CD4-positive, alpha-beta memory T cell (primary cell): ENCODE measurements at regions of chr3 and their contacts with region 1.

Region 1: DNA sequence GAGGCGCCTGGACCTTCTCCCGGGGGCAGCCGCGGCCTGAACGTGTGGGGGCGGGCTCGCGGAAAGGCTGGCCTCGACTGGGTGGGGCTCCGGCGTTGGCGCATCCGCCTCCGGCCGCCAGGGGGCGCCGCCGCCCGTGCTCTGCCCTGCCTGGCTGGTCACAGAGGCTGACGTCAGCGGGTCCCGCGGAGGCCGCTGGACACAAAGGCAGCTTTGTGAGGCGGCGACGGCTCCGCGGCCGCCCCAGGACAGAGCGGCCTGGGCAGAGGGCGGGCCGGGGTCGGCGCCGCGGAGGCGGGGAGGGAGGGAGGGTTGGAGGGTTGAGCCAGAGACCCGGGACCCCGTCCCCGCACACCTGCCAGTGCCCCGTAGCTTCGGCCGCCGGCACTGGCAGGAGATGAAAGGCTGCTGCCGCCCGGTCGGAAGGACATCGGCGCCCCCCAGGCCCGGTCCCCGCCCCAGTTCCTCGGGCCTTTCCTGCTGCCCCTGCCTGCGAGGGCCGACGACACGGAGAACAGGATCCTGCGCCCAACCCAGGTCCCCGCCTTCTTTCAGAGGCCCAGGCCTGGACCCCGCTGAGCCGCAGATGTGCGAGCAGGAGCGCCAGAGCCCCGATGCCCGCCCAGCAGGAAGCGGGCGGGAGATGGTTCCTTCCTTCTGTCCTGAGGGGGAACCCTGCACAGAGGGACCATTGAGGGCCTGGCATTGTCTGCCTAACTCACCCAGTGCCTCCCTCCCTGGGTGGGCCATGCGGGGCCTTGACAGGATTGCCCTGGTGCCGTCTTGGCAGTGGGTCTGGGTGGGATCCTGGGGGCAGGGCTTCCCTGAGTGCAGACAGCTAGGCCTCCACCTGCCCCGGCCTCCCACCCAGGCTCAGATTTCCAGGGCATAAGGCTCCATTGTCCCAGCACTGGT is 8.7 kb upstream of the SEMA3B start:
- DNase-seq: peak; percentile 76 to 82 (median 79)
- H3K4me3 ChIP-seq: peak overlapping the region in 1 of 2 donors; percentile 24
- H3K4me3 Mint-ChIP-seq: peak overlapping the region; percentile 36 to 83 (median 68)
- H3K27ac ChIP-seq: peak overlapping the region; percentile 46
- H3K27ac Mint-ChIP-seq: peak overlapping the region in 5 of 7 donors; percentile 48 to 91 (median 81)
- H3K4me1 ChIP-seq: peaks cover 13% of the 10 kb centered on the region
- H3K4me1 Mint-ChIP-seq: peaks cover 3 to 9% (median 4%) of the 10 kb centered on the region in 4 donors
- H3K27me3 ChIP-seq: no peaks in the 10 kb centered on the region
- H3K27me3 Mint-ChIP-seq: no peaks in the 10 kb centered on the region

Region 2: DNA sequence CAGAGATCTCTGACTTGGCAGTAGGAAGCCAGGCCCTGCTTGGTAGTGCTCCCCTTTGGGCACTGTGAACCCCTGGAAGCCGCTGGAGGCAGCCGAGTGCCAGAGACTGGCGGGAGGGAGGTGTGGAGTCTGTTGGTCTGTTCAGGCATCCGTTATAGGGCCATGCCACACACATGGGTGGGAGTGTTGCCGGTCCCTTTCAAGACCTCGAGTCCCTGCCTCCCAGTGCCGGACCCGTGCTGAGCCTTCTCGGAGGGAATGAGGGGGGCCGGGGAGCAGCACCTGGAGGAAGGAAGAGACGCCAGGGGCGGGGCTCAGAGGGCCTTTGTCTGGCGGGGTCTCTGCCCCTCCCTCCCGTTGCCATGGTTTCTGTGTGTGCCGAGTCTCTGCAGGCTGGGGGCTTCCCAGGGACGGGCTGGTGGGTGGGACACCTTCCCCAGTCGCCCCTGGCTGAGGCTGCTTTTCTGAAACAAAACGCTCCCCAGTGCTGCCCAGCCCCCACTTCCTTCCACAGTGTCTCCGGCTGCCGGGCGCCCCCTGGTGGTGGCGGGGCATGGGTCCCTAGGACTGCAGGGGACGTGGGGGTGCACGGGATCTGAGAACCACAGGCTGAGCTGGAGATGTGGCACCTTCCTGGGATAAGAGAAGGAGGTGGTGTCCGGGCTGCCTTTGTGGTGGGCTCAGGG is 14.3 kb before region 1 on chr3:
- CTCF ChIA-PET with region 1: interaction called, 34 read pairs
- POLR2A ChIA-PET with region 1: interaction called, 35 read pairs
- intact Hi-C with region 1: no loop called
- DNase-seq: peak; percentile 89 to 94 (median 92)
- H3K4me3 ChIP-seq: peak overlapping the region; percentile 24 to 44
- H3K4me3 Mint-ChIP-seq: peak overlapping the region; percentile 75 to 88 (median 80)
- H3K27ac ChIP-seq: peak overlapping the region; percentile 76
- H3K27ac Mint-ChIP-seq: peak overlapping the region; percentile 92 to 98 (median 95)
- H3K4me1 ChIP-seq: peaks cover 97% of the 10 kb centered on the region
- H3K4me1 Mint-ChIP-seq: peaks cover 44 to 89% (median 71%) of the 10 kb centered on the region in 4 donors
- H3K27me3 ChIP-seq: no peaks in the 10 kb centered on the region
- H3K27me3 Mint-ChIP-seq: no peaks in the 10 kb centered on the region

Region 3: DNA sequence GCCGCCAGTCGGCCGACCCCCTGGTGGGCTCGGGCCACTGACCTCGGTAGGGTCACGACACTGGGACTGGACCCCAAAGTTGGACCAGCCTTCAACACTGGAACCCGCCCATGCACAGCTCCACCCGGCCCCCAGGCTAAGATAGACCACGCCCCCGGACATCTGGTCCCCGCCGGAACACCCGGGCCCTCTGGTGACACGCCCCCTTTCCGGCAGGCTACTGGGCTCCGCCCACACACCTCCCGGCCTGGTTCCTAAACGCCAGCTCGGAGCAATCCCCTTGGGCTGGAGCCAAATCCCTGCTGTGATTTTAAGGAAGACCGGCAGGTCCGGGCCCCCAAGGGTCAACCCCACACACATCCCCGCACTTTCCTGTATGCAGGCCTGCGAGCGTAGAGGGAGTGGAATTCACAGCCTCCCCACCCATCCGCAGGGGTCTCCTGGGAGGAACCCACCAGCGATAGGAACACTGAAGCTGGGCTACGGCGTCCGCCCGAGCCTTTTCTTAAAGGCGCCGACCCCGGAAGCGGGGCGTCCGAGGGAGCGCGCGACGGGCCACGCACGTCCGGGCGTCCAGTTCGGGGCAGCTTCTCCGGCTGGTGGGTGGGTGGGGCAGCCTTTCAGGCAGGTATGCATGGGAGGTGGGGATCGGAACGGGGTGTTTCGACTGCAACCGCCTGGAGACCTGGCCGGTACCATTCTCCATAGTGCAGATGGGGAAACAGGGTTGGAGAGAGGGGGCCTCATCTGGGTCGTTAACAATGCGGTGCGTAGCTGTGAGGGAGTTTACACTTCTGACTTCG is 308.9 kb after region 1 on chr3 and contains the start of gene HEMK1:
- CTCF ChIA-PET with region 1: no interaction called
- POLR2A ChIA-PET with region 1: no interaction called
- intact Hi-C with region 1: no loop called
- DNase-seq: peak; percentile 90 to 92 (median 91)
- H3K4me3 ChIP-seq: peak within 1 kb of the TSS; percentile 88 to 93
- H3K4me3 Mint-ChIP-seq: peak within 1 kb of the TSS; percentile 93 to 98 (median 96)
- H3K27ac ChIP-seq: peak within 1 kb of the TSS; percentile 83
- H3K27ac Mint-ChIP-seq: peak within 1 kb of the TSS; percentile 92 to 100 (median 98)
- H3K4me1 ChIP-seq: peaks cover 71% of the 10 kb centered on the region
- H3K4me1 Mint-ChIP-seq: peaks cover 45 to 83% (median 57%) of the 10 kb centered on the region in 4 donors
- H3K27me3 ChIP-seq: no peaks in the 10 kb centered on the region
- H3K27me3 Mint-ChIP-seq: no peaks in the 10 kb centered on the region
- total RNA-seq, gene HEMK1: 55.3 to 56.7 TPM

Region 4: DNA sequence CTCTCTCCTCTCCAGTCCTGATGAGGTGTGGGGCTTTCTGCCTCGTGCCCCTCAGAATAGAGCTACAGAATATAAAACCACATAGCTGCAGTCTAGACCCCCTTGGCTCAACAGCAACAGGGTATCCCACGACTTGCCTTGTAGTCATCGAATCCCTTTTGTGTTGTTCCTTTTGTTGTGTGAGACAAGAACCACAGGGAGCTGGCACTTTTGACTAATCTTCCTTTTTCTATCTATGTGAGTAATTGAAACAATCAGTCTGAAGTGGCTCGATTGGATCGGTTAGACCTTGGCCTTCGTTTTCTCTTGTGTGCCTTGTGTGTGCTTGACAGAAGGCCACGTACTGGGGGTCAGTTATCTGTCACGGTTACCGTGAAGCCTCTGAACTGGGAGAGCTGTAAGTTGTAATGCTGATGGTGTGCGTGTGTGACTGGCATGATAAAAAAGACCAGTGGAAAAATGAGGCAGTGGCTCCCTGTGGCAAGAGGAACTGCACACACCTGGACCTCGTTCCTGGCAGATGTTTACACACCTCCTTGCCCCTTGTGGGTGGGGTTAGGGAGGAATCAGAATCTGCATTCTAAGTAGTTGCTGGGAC is 1541.9 kb after region 1 on chr3:
- CTCF ChIA-PET with region 1: no interaction called
- POLR2A ChIA-PET with region 1: no interaction called
- intact Hi-C with region 1: no loop called
- DNase-seq: no peak
- H3K4me3 ChIP-seq: no peak overlapping the region
- H3K4me3 Mint-ChIP-seq: no peak overlapping the region
- H3K27ac ChIP-seq: no peak overlapping the region
- H3K27ac Mint-ChIP-seq: peak overlapping the region in 3 of 7 donors; percentile 25 to 71 (median 51)
- H3K4me1 ChIP-seq: peaks cover 5% of the 10 kb centered on the region
- H3K4me1 Mint-ChIP-seq: peaks cover 3 to 17% (median 6%) of the 10 kb centered on the region in 4 donors
- H3K27me3 ChIP-seq: no peaks in the 10 kb centered on the region
- H3K27me3 Mint-ChIP-seq: peaks cover 1 to 2% of the 10 kb centered on the region in 2 donors